ENCODE measurements at regions of chr5 and their contacts with region 1.

Region 1: DNA sequence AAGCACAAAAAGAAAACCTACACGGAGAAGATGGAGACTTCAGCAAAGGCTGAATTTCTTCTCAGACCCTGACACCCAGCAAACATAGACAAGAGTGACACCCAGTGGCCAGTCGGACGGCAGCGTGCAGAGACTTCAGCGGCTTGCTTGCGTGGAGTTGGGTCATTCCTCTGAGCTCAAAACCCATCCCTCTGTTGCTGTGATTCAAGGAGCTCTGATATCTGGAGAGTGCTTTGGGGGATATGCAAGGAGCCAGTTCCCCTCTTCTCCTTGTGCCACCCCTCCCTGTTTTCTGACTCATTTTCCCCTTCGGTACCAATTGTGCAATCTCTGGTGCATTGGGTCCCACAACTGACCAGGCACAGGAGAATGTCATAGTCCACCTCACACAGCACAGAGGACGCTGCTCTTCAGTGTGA is 27.5 kb downstream of the SH3TC2 start:
- DNase-seq: peak; percentile 57 to 79
- ATAC-seq: peak; percentile 95 to 99
- H3K4me3 ChIP-seq: no peak overlapping the region
- H3K27ac ChIP-seq: no peak overlapping the region
- H3K4me1 ChIP-seq: peaks cover 7% of the 10 kb centered on the region; the same call in 1 of the 3 replicates
- CTCF ChIP-seq: peak; percentile 93
- EP300 ChIP-seq: no peak
- POLR2A ChIP-seq: no peak
- RAD21 ChIP-seq: peak; percentile 92 to 95

Region 2: GRCh38 chr5:148730943-148731861 is 304.2 kb before region 1 on chr5:
- CTCF ChIA-PET with region 1: interaction called, 432 read pairs
- POLR2A ChIA-PET with region 1: no interaction called
- DNase-seq: peak; percentile 64 to 85
- ATAC-seq: peak; percentile 80 to 93
- H3K4me3 ChIP-seq: peak overlapping the region; percentile 19; the same call in 1 of the 3 replicates
- H3K27ac ChIP-seq: no peak overlapping the region
- H3K4me1 ChIP-seq: peaks cover 11% of the 10 kb centered on the region; the same call in 1 of the 3 replicates
- CTCF ChIP-seq: peak; percentile 99
- EP300 ChIP-seq: no peak
- POLR2A ChIP-seq: no peak
- RAD21 ChIP-seq: peak; percentile 84 to 85

Region 3: DNA sequence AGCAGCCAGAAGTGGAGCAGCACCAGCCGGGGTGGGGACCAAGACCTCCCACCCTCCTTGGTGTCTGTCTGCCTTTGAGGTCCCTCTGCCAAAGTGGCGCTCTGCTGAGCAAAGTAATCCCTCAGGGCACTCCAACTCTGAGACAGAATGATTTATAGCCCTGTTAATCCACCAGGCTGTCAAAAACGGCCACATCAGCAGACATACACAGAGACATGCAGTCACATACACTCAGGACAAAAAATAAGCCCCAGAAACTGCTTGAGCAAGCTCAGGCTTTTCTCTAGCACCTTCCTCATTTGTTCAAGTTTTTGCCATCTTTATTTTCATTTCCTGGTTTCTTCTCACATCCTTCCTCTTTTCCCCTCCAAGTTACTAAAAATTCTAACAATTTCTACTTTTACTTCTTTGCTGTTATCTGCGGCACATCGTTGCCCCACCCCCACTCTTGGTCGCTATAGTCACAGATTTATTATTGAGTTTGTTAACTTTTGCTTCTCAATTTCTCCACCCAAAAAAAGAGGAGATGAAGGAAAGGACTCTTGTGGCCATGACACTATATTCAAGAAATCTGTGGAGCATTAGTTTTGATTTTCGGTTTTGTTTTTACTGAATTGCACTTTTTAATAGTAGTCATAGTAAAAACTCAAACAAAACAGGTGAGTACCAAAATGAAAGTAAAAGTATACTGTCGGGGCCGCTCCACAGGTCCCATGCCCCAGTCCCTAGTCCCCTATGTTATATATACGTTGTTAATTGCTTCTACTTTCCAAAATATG is 226.3 kb before region 1 on chr5:
- CTCF ChIA-PET with region 1: no interaction called
- POLR2A ChIA-PET with region 1: no interaction called
- DNase-seq: no peak
- ATAC-seq: peak in 1 of 2 experiments; percentile 50; a peak in 3 of 6 replicates
- H3K4me3 ChIP-seq: peak overlapping the region; percentile 38
- H3K27ac ChIP-seq: peak overlapping the region in 1 of 2 experiments; percentile 3; a peak in 2 of 6 replicates
- H3K4me1 ChIP-seq: 0 out of 3 replicates have a peak, but pooled peaks cover 3% of the 10 kb centered on the region
- CTCF ChIP-seq: no peak
- EP300 ChIP-seq: no peak
- POLR2A ChIP-seq: no peak
- RAD21 ChIP-seq: no peak

Region 4: DNA sequence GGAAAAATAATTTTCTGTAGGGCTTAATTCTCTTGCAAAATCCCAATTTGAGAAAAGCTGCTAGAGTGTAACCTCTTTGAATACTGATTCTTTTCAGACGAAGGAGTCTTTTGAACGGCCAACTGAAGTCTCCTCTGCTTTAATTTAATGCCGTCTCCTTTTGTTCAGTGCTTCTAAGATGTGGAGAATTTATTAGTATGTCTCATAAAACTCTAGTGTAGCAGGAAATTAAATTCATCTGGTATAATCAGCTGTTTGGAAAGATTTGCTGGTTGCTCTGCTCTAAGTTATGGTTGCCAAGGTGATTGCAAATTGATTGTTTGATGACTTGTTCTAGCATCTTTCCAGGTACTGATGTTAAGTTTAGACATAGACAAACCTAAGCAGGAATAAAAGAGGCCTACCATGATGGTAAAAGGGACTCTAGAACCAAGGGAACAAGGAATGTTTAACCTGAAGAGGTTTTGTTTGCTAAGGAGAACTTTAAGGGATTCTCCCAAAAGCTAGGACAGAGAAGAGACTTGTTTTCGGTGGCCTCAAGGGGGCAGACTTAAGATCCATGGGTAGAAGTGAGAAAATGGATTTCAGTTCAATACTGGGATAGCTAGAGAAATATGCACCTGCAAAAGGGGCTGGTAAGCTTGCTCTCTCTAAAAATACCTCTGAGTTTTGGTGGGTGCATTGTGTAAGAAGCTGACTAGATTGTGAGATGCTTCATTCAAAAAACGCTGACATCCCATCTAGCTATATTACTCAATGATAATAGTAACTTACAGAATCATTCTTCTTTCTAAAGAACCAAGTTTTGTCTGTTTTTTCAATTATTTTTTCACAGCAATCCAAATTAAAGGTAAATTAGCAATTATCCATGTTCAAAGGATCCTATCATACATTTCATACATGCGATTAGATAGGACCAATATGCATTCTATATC is 214.7 kb before region 1 on chr5:
- CTCF ChIA-PET with region 1: interaction called, 22 read pairs
- POLR2A ChIA-PET with region 1: no interaction called
- DNase-seq: peak in 1 of 2 experiments; percentile 46
- ATAC-seq: peak in 1 of 2 experiments; percentile 79; a peak in 3 of 6 replicates
- H3K4me3 ChIP-seq: no peak overlapping the region
- H3K27ac ChIP-seq: no peak overlapping the region
- H3K4me1 ChIP-seq: no peaks in the 10 kb centered on the region
- CTCF ChIP-seq: peak; percentile 64
- EP300 ChIP-seq: no peak
- POLR2A ChIP-seq: no peak
- RAD21 ChIP-seq: peak; percentile 25 to 47; a peak in 3 of 5 replicates

Region 5: GRCh38 chr5:148957591-148958202 is 77.7 kb before region 1 on chr5:
- CTCF ChIA-PET with region 1: interaction called, 27 read pairs
- POLR2A ChIA-PET with region 1: no interaction called
- DNase-seq: peak in 1 of 2 experiments; percentile 30
- ATAC-seq: peak in 1 of 2 experiments; percentile 86; a peak in 3 of 6 replicates
- H3K4me3 ChIP-seq: no peak overlapping the region
- H3K27ac ChIP-seq: no peak overlapping the region
- H3K4me1 ChIP-seq: no peaks in the 10 kb centered on the region
- CTCF ChIP-seq: peak; percentile 71
- EP300 ChIP-seq: no peak
- POLR2A ChIP-seq: no peak
- RAD21 ChIP-seq: peak; percentile 61 to 73

Region 6: DNA sequence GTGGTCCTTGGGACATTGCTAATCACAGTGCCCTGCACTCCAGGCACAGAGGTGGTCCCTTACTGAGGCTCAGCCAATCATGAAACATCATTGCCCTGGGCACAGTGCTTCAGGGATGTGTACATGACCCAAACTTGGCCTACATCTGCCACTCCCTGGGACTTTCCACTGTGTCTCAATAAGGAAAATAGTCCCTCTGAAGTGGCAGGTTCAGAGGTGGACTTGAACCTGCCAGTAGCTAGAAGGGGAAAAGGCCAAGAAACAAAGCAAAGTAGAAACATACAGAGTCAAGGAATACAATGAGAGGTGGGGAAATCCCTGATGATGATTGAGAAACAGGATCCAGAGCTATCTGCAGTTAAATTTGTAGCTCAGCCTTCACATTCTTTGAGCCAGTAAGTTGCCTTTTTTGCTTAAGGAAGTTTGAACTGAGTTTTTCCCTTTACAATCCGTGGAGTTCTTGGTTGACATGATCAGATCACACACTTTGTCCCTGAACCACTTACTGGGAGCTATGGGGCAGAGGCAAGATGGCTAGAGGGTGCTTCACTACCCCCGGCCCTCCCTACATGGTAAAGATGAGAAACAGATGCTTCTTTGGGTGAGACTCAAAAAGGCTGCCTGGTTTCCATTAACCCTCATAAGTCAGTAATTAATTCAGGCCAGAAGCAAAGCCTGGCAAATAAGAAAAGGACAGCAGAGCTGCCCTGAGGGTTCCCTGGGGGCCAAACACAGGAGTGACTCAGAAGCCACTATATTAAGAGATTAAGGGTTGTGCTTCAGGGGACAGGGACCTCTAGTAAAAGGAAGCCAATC is 30.1 kb before region 1 on chr5:
- CTCF ChIA-PET with region 1: interaction called, 68 read pairs
- POLR2A ChIA-PET with region 1: no interaction called
- DNase-seq: peak in 1 of 2 experiments; percentile 21
- ATAC-seq: no peak; a peak in 1 of 6 replicates
- H3K4me3 ChIP-seq: no peak overlapping the region
- H3K27ac ChIP-seq: peak overlapping the region in 1 of 2 experiments; percentile 19; a peak in 1 of 6 replicates
- H3K4me1 ChIP-seq: peaks cover 23% of the 10 kb centered on the region
- CTCF ChIP-seq: no peak
- EP300 ChIP-seq: no peak
- POLR2A ChIP-seq: no peak
- RAD21 ChIP-seq: no peak

Region 7: DNA sequence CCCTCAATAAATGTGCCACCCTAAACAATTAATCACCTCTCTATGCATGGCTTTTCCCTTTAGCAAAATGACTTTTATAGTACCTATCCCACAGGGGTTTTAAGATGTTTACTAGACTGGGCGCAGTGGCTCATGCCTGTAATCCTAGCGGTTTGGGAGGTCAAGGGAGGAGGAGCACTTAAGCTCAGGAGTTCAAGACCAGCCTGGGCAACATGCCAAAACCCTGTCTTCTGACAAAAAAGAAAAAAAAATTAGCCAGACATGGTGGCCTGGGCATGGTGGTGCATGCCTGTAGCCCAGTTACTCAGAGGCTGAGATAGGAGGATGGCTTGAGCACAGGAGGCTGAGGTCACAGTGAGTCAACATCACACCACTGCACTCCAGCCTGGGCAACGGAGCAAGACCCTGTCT is 14.0 kb after region 1 on chr5:
- CTCF ChIA-PET with region 1: interaction called, 26 read pairs
- POLR2A ChIA-PET with region 1: no interaction called
- DNase-seq: no peak
- ATAC-seq: no peak
- H3K4me3 ChIP-seq: no peak overlapping the region
- H3K27ac ChIP-seq: no peak overlapping the region
- H3K4me1 ChIP-seq: no peaks in the 10 kb centered on the region
- CTCF ChIP-seq: no peak
- EP300 ChIP-seq: no peak
- POLR2A ChIP-seq: no peak
- RAD21 ChIP-seq: no peak

Region 8: DNA sequence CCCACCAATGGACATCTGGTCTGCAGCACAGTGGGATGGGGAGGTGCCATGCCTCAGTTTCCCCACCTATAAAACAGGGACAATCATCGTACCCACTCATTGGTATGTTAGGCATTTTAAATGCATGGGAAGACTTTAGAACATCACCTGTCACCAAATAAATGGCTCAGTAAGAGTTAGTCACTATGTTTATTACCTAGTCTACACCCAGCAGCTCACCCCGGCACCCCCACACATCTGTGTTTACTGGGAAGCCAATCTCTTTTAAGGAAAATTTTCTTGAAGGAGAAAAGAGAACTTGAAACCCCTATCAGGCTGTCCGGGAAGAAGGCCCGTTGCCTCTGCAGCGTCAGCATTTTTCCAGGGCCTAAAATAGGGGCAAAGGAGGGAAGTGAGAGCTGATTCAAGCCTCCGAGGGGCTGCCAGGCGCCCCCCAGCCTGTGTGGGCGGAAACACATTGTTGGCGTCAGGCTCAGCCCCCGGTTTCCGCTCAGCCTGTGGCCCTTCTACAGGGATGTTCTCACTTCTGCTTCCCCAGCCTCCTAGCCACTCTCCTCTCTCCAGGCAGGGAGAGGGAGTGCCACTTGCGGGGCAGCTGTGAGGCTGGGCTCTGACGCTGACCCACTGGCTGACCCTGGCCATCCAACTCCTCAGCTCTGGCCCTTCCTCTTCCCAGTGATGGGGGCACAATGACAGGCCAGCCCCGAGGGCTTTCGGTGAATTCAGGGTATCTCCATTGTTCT is 1046.3 kb after region 1 on chr5:
- CTCF ChIA-PET with region 1: no interaction called
- POLR2A ChIA-PET with region 1: no interaction called
- DNase-seq: no peak
- ATAC-seq: peak in 1 of 2 experiments; percentile 53; a peak in 3 of 6 replicates
- H3K4me3 ChIP-seq: no peak overlapping the region
- H3K27ac ChIP-seq: no peak overlapping the region
- H3K4me1 ChIP-seq: no peaks in the 10 kb centered on the region
- CTCF ChIP-seq: no peak
- EP300 ChIP-seq: no peak
- POLR2A ChIP-seq: no peak
- RAD21 ChIP-seq: no peak

Measured in A549 (cell line).